Posterior cingulate gyrus (tissue), 11 donors: ENCODE measurements at regions of chr12 and their contacts with region 1.

Region 1: DNA sequence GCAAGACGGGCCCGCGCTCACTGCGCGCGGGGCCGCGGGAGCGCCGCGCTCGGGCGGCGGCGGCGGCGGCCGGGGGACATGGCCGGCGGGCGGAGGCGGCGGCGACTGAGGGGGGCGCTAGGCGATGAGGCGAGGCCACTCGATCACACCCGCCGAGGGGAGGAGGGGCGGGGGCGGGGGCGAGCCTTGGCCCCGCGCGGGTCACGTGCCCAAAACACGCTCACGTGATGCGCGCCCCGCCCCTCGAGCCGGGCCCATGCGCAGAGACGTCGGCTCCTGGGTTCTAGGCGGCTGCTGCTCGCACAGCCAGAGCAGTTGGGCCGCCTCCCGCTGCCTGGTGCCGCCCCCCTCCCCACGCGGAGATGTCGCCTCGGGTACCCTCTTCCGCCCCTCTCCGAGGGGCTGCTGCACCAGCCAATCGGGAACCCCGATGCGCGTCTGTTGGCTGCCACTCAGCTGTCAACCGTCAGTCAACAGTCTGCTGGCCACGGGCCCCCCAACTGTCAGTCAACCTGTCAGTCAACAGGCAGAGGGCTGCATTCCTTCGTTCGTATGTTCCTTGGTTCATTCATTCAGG is at the start of gene SPPL3:
- DNase-seq: peak; percentile 86 to 98 (median 90)

Region 2: DNA sequence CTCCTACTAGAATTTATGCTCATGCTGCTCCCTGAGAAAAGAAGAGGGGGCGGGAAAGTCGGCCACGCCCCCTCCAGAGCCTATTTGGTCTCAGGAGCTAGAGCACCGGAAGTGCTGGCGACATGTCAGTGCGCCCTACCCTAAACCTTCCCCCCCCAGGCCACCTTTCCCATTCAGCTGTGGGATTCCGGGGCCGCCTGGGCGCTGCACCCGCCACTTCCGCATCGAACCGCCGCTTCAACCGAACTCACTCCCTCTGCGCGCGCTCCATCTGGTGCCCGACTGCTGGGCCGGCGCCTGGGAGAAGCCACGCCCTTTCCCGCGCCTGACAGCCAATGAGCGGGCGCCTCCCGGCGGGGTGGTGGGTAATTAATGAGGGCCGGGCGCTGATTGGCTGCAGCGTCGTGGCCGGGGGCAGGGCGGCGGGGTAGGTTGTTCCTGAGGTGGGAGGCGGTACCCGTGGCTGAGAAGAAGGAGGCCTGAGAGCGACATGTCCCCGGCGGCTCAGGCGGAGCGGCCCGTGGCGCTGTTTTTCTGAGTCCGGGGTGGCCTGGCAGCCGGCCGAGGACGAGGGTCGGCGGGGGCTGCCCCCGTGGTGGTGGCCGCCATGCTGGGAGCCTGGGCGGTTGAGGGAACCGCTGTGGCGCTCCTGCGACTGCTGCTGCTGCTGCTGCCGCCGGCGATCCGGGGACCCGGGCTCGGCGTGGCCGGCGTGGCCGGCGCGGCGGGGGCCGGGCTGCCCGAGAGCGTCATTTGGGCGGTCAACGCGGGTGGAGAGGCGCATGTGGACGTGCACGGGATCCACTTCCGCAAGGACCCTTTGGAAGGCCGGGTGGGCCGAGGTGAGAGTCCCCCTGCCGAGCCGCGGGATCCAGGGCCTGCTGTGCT is 217.4 kb before region 1 on chr12 and contains the start of gene MLEC:
- intact Hi-C with region 1: loop called (anchors 2 kb)
- DNase-seq: peak; percentile 97 to 100 (median 99)

Region 3: DNA sequence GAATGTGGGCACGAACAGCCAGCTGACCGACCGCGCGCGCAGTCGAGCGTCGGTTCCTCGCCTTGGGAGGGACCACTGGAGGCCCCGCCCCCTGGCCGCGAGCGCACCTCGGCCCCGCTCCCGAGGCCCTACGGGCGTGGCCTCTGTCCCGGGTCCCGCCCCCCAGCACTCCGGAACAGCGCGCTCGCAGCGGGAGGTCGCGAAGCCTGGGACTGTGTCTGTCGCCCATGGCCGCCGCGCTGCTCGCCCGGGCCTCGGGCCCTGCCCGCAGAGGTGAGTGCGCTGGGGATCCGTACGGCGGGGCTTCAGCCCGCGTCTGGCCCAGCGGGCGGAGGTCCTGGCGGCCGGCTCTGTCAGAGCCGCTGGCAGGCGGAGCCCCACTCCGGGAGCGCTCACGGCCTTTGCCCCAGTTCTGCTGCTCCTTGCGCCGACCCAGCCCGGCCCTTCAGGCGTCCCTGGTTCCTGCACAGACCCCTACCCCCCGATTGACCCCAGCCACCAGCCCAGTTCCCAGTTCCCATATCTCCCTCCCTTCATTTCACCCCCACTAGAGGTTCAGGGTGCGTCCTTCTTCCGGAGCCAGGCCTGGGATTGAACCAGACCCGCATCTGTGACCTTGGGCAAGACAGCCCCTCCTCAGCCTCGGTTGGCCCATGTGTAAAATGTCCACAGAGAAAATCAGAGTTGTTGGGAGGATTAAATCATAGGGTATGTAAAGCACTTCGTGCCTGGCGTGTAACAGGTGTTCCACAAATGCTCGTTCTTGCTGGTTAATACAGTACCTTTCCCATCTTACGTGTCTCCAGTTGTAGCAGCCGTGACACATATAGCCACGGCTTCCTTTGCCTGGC is 178.4 kb before region 1 on chr12 and contains the start of gene ACADS:
- intact Hi-C with region 1: loop called (anchors 10 kb)
- DNase-seq: peak; percentile 62 to 97 (median 80)

Region 4: GRCh38 chr12:120761519-120761934 is 142.8 kb before region 1 on chr12:
- intact Hi-C with region 1: loop called (anchors 5 kb)
- DNase-seq: no peak

Region 5: DNA sequence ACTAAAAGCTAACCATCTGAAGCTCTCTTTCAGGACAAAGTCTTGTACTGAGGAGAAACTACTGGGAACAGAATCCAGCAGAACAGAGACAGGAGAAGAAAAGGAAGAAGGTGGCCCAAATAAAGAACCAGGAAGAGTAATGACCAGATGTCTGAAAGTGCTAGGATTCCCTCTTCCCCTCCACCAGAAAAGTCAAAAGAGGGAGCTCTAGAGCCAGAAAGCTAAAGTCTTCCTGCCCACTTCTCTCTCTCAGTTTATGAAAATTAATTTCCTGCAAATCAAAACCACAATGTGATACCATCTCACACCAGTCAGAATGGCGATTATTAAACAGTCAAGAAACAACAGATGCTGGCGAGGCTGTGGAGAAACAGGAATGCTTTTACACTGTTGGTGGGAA is 47.3 kb before region 1 on chr12:
- intact Hi-C with region 1: loop called (anchors 5 kb)
- DNase-seq: no peak